PC-9 (cell line): ENCODE measurements at regions of chr17 and their contacts with region 1.

Region 1: GRCh38 chr17:17635126-17635525 is 43.6 kb upstream of the PEMT start:
- DNase-seq: no peak
- H3K4me3 ChIP-seq: no peak overlapping the region
- H3K27ac ChIP-seq: no peak overlapping the region
- H3K4me1 ChIP-seq: no peaks in the 10 kb centered on the region
- H3K27me3 ChIP-seq: no peaks in the 10 kb centered on the region
- CTCF ChIP-seq: no peak

Region 2: DNA sequence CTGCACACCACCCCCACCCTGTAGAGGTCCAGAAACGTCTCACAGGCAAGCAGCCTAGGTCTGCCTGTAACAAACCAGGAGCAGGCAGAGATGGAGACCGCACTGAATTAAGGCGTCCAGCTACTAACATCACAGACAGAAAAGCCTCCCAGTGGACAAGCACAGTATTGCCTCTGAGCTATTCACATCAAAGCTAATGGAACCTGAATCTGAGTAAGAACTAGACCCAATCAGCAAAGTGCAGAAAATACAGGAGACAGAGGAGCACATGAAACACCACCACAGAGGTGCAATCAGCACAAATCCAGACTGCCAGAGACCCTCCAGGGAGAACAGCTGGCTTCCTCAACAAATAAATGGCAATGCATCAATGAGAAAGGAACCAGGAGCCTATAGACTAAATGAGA is 21.4 kb before region 1 on chr17:
- CTCF ChIA-PET with region 1: interaction called, 11 read pairs
- POLR2A ChIA-PET with region 1: no interaction called
- intact Hi-C with region 1: no loop called
- DNase-seq: peak; percentile 45 to 50
- H3K4me3 ChIP-seq: no peak overlapping the region
- H3K27ac ChIP-seq: no peak overlapping the region
- H3K4me1 ChIP-seq: no peaks in the 10 kb centered on the region
- H3K27me3 ChIP-seq: no peaks in the 10 kb centered on the region
- CTCF ChIP-seq: peak; percentile 84

Region 3: DNA sequence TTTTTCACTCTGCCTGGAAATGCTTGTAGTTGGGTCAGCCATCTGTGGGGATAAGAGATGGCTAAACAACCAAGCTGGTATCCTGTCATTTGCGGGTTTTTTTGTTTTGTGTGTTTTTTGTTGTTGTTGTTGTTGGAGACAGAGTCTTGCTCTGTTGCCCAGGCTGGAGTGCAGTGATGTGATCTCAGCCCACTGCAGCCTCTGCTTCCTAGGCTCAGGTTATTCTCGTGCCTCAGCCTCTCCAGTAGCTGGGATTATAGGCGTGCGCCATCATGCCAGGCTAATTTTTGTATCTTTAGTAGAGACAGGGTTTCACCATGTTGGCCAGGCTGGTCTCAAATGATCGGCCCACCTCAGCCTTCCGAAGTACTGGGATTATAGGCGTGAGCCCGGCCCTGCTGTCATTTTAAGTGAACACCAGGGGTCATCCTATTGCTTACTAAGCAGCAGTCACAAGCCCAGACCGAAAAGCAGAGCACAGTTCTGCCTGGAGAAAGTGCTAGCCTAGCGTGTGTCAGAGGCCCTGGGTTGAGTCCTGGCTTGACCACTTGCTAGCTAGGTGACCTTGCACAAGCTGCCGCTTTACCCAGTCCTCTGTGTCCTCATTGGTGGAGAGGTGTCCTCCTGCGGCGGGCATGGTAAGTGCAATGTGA is 684.6 kb after region 1 on chr17:
- CTCF ChIA-PET with region 1: no interaction called
- POLR2A ChIA-PET with region 1: no interaction called
- intact Hi-C with region 1: no loop called
- DNase-seq: peak in 1 of 2 experiments; percentile 34
- H3K4me3 ChIP-seq: no peak overlapping the region
- H3K27ac ChIP-seq: no peak overlapping the region
- H3K4me1 ChIP-seq: peaks cover 31% of the 10 kb centered on the region
- H3K27me3 ChIP-seq: no peaks in the 10 kb centered on the region
- CTCF ChIP-seq: peak; percentile 48; the same call in 1 of the 2 replicates